ENCODE measurements at regions of chr11 and their contacts with region 1.

Region 1: GRCh38 chr11:117178210-117179034 is at the start of gene SIDT2:
- DNase-seq: peak; percentile 96
- ATAC-seq: peak; percentile 95
- H3K4me3 Mint-ChIP-seq: peak within 1 kb of the TSS; percentile 92
- H3K27ac Mint-ChIP-seq: peak within 1 kb of the TSS; percentile 85
- H3K4me1 Mint-ChIP-seq: peaks cover 32% of the 10 kb centered on the region
- H3K27me3 Mint-ChIP-seq: no peaks in the 10 kb centered on the region
- CTCF ChIP-seq: no peak
- total RNA-seq, gene SIDT2: 16.6 to 17.3 TPM

Region 2: DNA sequence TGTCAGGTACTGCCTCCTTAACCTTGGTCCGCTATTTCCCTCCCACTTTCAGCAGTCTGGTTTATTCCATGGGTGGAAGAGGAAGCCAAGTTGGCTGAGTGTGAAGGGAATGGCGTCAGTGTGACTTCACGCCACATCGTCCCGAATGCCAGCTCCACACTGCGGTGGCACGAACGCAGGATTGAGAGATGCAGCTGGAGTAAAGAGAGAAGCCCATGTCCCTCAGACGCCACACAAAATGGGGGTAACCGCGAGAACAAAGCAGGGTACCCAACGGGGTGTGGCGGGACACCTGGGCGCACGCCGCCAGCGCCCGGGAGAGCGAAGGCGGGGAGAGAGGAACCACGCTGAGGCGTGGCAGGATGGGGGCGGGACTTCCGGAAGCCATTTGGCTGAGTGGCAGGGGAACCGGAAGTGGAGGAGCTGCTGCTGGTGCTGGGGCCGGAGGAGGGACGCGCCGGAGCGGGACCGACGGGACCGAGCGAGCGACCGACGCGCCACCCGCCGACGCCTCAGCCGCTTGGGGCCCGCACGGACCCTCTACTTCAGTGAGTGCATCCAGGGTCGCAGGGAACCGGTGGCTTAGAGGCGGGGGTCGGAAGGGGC is 34.4 kb before region 1 on chr11 and contains the start of gene PAFAH1B2:
- CTCF ChIA-PET with region 1: interaction called, 16 read pairs
- POLR2A ChIA-PET with region 1: interaction called, 25 read pairs
- intact Hi-C with region 1: no loop called
- DNase-seq: peak; percentile 97
- ATAC-seq: peak; percentile 94
- H3K4me3 Mint-ChIP-seq: peak within 1 kb of the TSS; percentile 99
- H3K27ac Mint-ChIP-seq: peak within 1 kb of the TSS; percentile 92
- H3K4me1 Mint-ChIP-seq: peaks cover 34% of the 10 kb centered on the region
- H3K27me3 Mint-ChIP-seq: peaks cover 8% of the 10 kb centered on the region
- CTCF ChIP-seq: no peak
- total RNA-seq, gene PAFAH1B2: 50.0 to 50.2 TPM

Region 3: DNA sequence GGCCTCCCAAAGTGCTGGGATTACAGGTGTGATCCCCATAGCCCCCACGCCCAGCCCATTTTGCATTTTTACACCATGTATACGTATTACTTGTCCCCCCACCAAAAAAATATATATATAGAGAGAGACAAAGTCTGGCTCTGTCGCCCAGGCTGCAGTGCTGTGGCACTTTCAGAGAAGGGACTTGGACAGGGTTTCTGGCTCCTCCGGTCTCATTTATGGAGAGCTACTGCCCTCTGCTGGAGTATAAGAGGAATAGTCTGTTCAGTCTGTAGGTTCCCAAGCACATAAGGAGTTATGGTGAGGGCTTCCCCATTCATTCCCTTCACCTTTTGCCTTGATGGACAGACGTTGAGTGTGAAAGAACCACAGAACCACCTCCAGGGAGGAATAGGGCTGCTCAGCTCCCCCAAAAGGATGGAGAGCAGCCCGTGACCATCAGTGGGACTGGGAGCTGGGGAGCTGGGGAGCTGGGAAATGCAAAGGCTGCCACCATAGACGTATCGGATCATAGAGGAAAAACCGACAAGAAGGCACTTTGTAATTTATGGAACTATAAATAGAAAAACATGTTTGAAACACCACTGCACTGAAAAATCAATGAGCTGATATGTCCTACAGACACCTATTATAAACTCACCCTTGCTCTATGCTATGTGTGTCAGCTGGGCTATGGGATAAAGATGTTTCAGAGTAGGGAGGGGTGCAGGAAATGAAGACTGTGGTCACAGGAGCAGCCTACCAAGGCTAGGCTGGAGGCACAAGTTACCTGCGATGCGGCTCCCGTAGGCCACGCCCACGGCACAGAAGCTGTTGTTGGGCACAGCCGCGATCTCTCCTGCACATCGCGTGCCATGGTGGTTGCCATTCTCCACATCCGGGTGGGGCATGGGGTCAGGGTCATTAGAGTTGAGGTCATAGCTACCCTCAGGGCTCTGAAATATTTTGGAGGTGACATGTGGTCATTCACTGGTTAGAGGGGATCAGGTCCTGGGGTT is 48.3 kb after region 1 on chr11:
- CTCF ChIA-PET with region 1: interaction called, 125 read pairs
- POLR2A ChIA-PET with region 1: interaction called, 29 read pairs
- intact Hi-C with region 1: loop called (anchors 5 kb)
- DNase-seq: peak; percentile 51
- ATAC-seq: peak; percentile 48
- H3K4me3 Mint-ChIP-seq: no peak overlapping the region
- H3K27ac Mint-ChIP-seq: peak overlapping the region; percentile 20
- H3K4me1 Mint-ChIP-seq: peaks cover 29% of the 10 kb centered on the region
- H3K27me3 Mint-ChIP-seq: no peaks in the 10 kb centered on the region
- CTCF ChIP-seq: peak; percentile 86

Region 4: GRCh38 chr11:117232092-117232878 is 53.9 kb after region 1 on chr11 and contains the start of gene RNF214:
- CTCF ChIA-PET with region 1: interaction called, 125 read pairs
- POLR2A ChIA-PET with region 1: interaction called, 29 read pairs
- intact Hi-C with region 1: loop called (anchors 5 kb)
- DNase-seq: peak; percentile 71
- ATAC-seq: peak; percentile 73
- H3K4me3 Mint-ChIP-seq: peak within 1 kb of the TSS; percentile 94
- H3K27ac Mint-ChIP-seq: peak within 1 kb of the TSS; percentile 98
- H3K4me1 Mint-ChIP-seq: peaks cover 34% of the 10 kb centered on the region
- H3K27me3 Mint-ChIP-seq: no peaks in the 10 kb centered on the region
- CTCF ChIP-seq: peak; percentile 93
- total RNA-seq, gene RNF214: 14.7 to 18.3 TPM

Measured in activated CD8-positive, alpha-beta T cell treated with anti-CD3 and anti-CD28 coated beads for 36 hours (primary cell).